ENCODE measurements at regions of chr2 and their contacts with region 1.

Region 1: DNA sequence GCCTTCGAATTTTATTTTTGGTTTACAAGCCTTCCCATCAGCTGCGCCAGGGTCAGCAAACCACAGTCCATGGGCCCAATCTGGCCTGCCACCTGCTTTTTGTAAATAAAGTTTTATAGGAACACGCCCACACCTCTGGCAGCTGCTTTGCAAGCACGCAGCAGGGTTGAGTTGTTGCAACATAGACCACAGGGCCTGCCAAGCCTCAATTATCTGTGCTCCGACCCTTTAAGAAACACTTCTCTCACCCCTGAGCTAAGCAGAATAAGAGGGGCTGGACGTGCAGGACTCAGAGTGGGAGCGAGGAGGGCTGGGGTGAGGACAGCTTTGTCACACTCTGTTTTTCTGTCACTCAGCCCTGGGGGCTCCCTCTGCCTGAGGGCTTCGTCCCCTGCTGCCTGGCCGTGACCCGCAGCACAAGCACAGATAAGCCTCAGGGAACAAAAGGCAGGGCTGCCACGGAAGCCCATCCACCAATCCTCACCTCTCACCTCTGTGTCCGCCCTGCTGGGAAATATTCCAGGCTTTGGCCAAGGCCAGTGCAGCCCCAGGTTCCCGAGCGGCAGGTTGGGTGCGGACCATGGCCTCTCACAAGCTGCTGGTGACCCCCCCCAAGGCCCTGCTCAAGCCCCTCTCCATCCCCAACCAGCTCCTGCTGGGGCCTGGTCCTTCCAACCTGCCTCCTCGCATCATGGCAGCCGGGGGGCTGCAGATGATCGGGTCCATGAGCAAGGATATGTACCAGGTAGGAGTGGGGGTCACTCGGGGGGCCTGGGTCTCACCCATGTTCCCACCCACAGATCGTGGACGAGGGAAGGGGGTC is at the start of gene AGXT:
- DNase-seq: no peak
- H3K4me3 ChIP-seq: no peak within 1 kb of the TSS
- H3K27ac ChIP-seq: no peak within 1 kb of the TSS
- H3K4me1 ChIP-seq: no peaks in the 10 kb centered on the region
- H3K27me3 ChIP-seq: no peaks in the 10 kb centered on the region
- CTCF ChIP-seq: no peak
- EP300 ChIP-seq: no peak
- POLR2A ChIP-seq: no peak
- RAD21 ChIP-seq: no peak
- total RNA-seq, gene AGXT: not detected in 2 replicates

Region 2: DNA sequence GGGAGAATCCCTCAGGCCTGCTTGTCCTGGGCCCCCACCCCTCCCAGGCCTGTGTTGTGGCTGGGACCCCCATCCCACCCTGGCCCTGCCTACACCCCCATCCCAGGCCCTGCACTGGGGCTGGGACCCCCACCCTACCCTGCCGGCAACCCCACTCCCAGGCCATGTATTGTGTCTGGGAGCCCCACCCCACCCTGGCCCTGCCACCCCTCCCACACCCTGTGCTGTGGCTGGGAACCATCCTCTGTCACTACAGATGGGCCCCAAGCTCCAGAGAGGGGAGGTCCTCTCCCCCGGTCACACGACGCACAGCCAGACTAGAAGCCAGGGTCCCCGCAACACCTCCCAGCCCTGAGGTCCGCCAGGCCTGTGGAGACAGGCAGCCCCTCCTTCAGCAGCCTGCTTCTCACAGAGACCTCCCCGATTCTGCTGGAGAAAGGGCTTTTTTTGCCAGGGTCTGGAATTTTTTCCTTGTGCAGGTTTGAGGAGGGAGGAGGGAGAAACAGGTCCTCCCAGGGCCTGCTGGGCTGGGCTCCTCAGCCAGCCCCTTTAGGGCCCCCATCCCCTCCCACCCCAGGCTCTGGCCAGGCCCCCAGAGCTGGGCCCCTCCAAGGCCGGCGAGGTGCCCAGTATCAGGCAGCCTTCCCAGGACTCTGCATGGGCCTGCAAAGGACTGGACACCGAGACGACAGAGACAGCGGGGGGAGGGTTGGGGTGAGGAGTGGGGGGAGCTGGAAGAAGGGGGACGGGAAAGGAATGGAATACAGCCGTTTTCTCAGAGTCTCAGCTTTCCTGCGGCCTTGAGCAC is 76.5 kb before region 1 on chr2:
- CTCF ChIA-PET with region 1: no interaction called
- POLR2A ChIA-PET with region 1: no interaction called
- DNase-seq: no peak
- H3K4me3 ChIP-seq: no peak overlapping the region
- H3K27ac ChIP-seq: no peak overlapping the region
- H3K4me1 ChIP-seq: peaks cover 0 to 11% (median 8%) of the 10 kb centered on the region in 4 experiments; a peak in 5 of 7 replicates
- H3K27me3 ChIP-seq: no peaks in the 10 kb centered on the region
- CTCF ChIP-seq: no peak
- EP300 ChIP-seq: no peak
- POLR2A ChIP-seq: no peak
- RAD21 ChIP-seq: no peak

Region 3: DNA sequence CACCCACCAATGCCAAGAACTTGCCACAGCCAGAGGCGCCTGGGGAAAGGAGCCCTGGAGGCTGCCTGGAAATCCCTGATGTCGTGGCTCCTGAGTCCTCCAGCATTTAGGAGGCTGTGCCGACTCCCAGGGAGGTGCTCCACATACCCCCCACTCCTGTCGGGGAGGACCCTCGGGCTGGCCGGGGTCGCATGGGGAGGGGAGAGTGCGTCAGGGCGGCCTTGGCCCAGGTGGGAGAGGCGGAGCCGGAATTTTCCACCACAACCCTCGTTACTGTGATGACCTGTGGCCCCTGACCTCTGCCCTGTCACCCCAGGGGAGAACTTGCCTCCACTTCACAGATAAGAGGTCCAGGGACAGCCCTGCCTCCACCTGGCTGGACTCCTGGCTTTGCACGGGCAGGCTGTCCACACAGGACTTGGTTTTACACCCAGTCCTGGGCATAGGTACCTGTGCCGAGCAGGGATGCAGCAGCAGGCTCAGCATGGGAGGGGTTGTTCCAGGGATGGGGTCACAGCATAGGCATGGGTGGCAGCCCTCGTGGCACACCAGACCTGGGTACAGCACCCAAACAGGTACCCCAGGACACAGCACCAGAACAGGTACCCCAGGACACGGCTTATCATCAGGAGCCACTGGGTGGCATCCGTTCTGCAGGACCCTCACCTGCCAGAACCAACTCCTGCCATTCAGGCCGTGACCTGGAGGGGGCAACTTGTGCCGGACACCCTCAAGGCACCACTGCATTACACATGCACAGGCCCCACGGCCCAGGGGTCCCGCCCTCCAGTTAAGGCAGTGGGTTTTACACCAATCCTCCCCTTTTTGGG is 12.1 kb before region 1 on chr2:
- CTCF ChIA-PET with region 1: interaction called, 15 read pairs
- POLR2A ChIA-PET with region 1: no interaction called
- DNase-seq: peak; percentile 27 to 79
- H3K4me3 ChIP-seq: no peak overlapping the region
- H3K27ac ChIP-seq: no peak overlapping the region
- H3K4me1 ChIP-seq: no peaks in the 10 kb centered on the region; a peak in 1 of 7 replicates
- H3K27me3 ChIP-seq: no peaks in the 10 kb centered on the region
- CTCF ChIP-seq: peak in 2 of 3 experiments; percentile 88 to 98; a peak in 3 of 4 replicates
- EP300 ChIP-seq: no peak
- POLR2A ChIP-seq: no peak
- RAD21 ChIP-seq: peak; percentile 67 to 74

Region 4: GRCh38 chr2:240887631-240888030 is 19.1 kb after region 1 on chr2:
- CTCF ChIA-PET with region 1: no interaction called
- POLR2A ChIA-PET with region 1: no interaction called
- DNase-seq: no peak
- H3K4me3 ChIP-seq: no peak overlapping the region
- H3K27ac ChIP-seq: no peak overlapping the region
- H3K4me1 ChIP-seq: no peaks in the 10 kb centered on the region; a peak in 2 of 7 replicates
- H3K27me3 ChIP-seq: no peaks in the 10 kb centered on the region
- CTCF ChIP-seq: no peak
- EP300 ChIP-seq: no peak
- POLR2A ChIP-seq: no peak
- RAD21 ChIP-seq: no peak